ENCODE measurements at regions of chr2 and their contacts with region 1.

Region 1: DNA sequence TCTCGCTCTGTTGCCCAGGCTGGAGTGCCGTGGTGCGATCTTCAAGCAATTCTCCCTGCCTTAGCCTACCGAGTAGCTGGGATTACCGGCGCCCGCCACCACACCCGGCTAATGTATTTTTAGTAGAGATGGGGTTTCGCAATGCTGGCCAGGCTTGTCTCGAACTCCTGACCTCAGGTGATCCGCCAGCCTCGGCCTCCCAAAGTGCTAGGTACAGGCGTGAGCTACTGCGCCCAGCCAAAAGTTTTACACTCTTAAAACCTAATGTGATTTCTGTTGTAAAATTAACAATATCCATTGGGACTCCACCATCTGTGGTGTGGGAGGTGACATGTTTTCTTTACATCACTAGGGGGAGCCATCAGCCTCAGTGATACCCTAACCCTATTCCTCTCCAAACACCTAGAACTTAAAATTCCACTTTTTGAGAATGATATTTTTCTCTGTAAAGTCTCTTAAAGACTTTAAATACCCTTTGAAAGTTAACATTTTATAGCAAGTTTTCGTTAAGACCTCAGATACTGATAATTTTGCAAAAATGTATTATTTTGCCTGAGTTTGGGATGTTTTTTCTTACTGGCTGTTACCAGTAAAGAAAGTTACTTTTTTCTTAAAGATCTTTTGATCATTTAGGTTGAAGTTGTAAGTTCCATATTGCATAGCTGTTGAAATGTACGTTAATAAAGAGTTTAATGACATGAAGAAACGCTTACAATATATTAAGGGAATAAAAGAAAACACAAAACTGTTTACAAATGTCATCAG is 11.6 kb upstream of the EIF2AK2 start:
- DNase-seq: peak; percentile 91
- H3K4me3 ChIP-seq: no peak overlapping the region; a peak in 1 of 4 replicates
- H3K27ac ChIP-seq: no peak overlapping the region
- H3K4me1 ChIP-seq: no peaks in the 10 kb centered on the region
- H3K27me3 ChIP-seq: no peaks in the 10 kb centered on the region
- CTCF ChIP-seq: peak; percentile 90
- EP300 ChIP-seq: no peak
- RAD21 ChIP-seq: peak; percentile 89

Region 2: GRCh38 chr2:37156857-37157714 is 11.3 kb before region 1 on chr2 and contains the start of gene EIF2AK2:
- CTCF ChIA-PET with region 1: interaction called, 57 read pairs
- POLR2A ChIA-PET with region 1: no interaction called
- DNase-seq: peak; percentile 100
- H3K4me3 ChIP-seq: peak within 1 kb of the TSS; percentile 68
- H3K27ac ChIP-seq: peak within 1 kb of the TSS; percentile 74 to 77
- H3K4me1 ChIP-seq: peaks cover 10 to 15% of the 10 kb centered on the region in 2 experiments; a peak in 3 of 4 replicates
- H3K27me3 ChIP-seq: no peaks in the 10 kb centered on the region
- CTCF ChIP-seq: no peak
- EP300 ChIP-seq: peak in 1 of 2 experiments; percentile 55; a peak in 1 of 4 replicates
- RAD21 ChIP-seq: no peak
- polyA plus RNA-seq, gene EIF2AK2: 9.0 and 9.4 TPM in 2 replicates

Region 3: DNA sequence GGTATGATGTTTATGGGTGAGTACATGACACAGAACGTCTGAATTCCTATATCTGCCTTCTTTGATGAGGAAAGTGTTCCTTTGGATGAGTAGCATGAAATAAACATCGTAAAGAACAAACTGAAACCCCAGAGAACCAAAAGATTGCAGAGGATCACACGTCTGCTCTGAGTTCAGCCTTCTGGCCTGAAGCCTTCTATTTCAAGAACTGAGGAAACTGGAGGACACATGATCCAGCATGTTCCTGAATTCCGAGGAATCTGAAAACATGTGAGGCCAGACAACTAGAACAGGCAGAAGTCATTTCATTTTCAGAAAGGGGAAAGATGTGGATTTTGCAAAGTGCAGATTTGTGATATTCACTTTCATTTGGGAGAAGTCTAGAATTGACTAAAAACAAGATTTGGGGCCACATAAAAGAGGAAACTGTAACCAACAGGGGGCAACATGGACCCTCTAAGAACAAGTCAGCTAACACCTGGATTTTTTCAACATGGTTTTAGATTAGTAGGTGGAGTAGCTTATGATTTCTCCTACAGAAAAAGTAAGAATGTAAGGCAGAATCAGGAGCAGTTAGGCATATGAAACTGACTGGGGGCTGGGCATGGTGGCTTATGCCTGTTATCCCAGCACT is 11.7 kb after region 1 on chr2:
- CTCF ChIA-PET with region 1: interaction called, 20 read pairs
- POLR2A ChIA-PET with region 1: interaction called, 5 read pairs
- DNase-seq: no peak
- H3K4me3 ChIP-seq: no peak overlapping the region
- H3K27ac ChIP-seq: no peak overlapping the region
- H3K4me1 ChIP-seq: no peaks in the 10 kb centered on the region
- H3K27me3 ChIP-seq: no peaks in the 10 kb centered on the region
- CTCF ChIP-seq: no peak; the same call in 1 of the 2 replicates
- EP300 ChIP-seq: no peak
- RAD21 ChIP-seq: no peak

Region 4: GRCh38 chr2:37201766-37202165 is 33.4 kb after region 1 on chr2:
- CTCF ChIA-PET with region 1: interaction called, 16 read pairs
- POLR2A ChIA-PET with region 1: no interaction called
- DNase-seq: no peak
- H3K4me3 ChIP-seq: no peak overlapping the region
- H3K27ac ChIP-seq: peak overlapping the region in 1 of 2 experiments; percentile 0; a peak in 2 of 4 replicates
- H3K4me1 ChIP-seq: peaks cover 6 to 15% of the 10 kb centered on the region in 2 experiments; a peak in 3 of 4 replicates
- H3K27me3 ChIP-seq: no peaks in the 10 kb centered on the region
- CTCF ChIP-seq: no peak
- EP300 ChIP-seq: no peak
- RAD21 ChIP-seq: no peak

Region 5: DNA sequence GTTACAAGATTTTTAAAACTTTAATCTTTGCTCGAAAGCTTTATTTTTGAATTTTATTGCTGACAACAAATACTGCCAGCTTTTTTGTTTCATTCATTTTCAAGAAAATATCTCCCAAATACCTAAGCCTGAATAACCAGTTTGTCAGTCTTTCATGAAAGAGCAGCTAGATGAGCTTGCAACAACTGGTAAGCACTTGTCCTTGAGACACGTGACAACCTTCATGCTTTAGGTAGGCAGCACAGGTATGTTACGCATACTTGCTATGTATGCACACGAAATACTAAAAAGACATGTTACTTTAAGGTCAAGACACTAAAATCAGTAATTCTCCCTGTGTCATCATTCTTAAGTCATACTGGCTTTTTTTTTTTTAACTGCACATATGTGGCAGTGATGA is 50.6 kb after region 1 on chr2:
- CTCF ChIA-PET with region 1: interaction called, 11 read pairs
- POLR2A ChIA-PET with region 1: no interaction called
- DNase-seq: no peak
- H3K4me3 ChIP-seq: no peak overlapping the region
- H3K27ac ChIP-seq: no peak overlapping the region
- H3K4me1 ChIP-seq: peaks cover 0 to 6% of the 10 kb centered on the region in 2 experiments; a peak in 2 of 4 replicates
- H3K27me3 ChIP-seq: no peaks in the 10 kb centered on the region
- CTCF ChIP-seq: no peak
- EP300 ChIP-seq: no peak
- RAD21 ChIP-seq: no peak

Region 6: GRCh38 chr2:37224063-37224462 is 55.7 kb after region 1 on chr2:
- CTCF ChIA-PET with region 1: interaction called, 11 read pairs
- POLR2A ChIA-PET with region 1: no interaction called
- DNase-seq: no peak
- H3K4me3 ChIP-seq: no peak overlapping the region
- H3K27ac ChIP-seq: no peak overlapping the region
- H3K4me1 ChIP-seq: peaks cover 8 to 11% of the 10 kb centered on the region in 2 experiments; a peak in 3 of 4 replicates
- H3K27me3 ChIP-seq: no peaks in the 10 kb centered on the region
- CTCF ChIP-seq: no peak
- EP300 ChIP-seq: no peak
- RAD21 ChIP-seq: no peak

Region 7: GRCh38 chr2:37523814-37524362 is 355.5 kb after region 1 on chr2:
- CTCF ChIA-PET with region 1: no interaction called
- POLR2A ChIA-PET with region 1: no interaction called
- DNase-seq: no peak
- H3K4me3 ChIP-seq: no peak overlapping the region
- H3K27ac ChIP-seq: no peak overlapping the region
- H3K4me1 ChIP-seq: peaks cover 0 to 2% of the 10 kb centered on the region in 2 experiments; a peak in 2 of 4 replicates
- H3K27me3 ChIP-seq: no peaks in the 10 kb centered on the region
- CTCF ChIP-seq: no peak
- EP300 ChIP-seq: no peak
- RAD21 ChIP-seq: no peak

Region 8: GRCh38 chr2:37890893-37891495 is 722.6 kb after region 1 on chr2:
- CTCF ChIA-PET with region 1: interaction called, 11 read pairs
- POLR2A ChIA-PET with region 1: no interaction called
- DNase-seq: peak; percentile 85
- H3K4me3 ChIP-seq: no peak overlapping the region
- H3K27ac ChIP-seq: no peak overlapping the region; a peak in 1 of 4 replicates
- H3K4me1 ChIP-seq: peaks cover 6 to 8% of the 10 kb centered on the region in 2 experiments; a peak in 3 of 4 replicates
- H3K27me3 ChIP-seq: no peaks in the 10 kb centered on the region
- CTCF ChIP-seq: peak; percentile 95
- EP300 ChIP-seq: no peak
- RAD21 ChIP-seq: peak; percentile 95

Measured in SK-N-SH (cell line).